GM13976 (cell line): ENCODE measurements at regions of chrX and their contacts with region 1.

Region 1: GRCh38 chrX:3638280-3638873 is 75.1 kb downstream of the PRKX start:
- DNase-seq: peak; percentile 65
- CTCF ChIP-seq: peak; percentile 46

Region 2: DNA sequence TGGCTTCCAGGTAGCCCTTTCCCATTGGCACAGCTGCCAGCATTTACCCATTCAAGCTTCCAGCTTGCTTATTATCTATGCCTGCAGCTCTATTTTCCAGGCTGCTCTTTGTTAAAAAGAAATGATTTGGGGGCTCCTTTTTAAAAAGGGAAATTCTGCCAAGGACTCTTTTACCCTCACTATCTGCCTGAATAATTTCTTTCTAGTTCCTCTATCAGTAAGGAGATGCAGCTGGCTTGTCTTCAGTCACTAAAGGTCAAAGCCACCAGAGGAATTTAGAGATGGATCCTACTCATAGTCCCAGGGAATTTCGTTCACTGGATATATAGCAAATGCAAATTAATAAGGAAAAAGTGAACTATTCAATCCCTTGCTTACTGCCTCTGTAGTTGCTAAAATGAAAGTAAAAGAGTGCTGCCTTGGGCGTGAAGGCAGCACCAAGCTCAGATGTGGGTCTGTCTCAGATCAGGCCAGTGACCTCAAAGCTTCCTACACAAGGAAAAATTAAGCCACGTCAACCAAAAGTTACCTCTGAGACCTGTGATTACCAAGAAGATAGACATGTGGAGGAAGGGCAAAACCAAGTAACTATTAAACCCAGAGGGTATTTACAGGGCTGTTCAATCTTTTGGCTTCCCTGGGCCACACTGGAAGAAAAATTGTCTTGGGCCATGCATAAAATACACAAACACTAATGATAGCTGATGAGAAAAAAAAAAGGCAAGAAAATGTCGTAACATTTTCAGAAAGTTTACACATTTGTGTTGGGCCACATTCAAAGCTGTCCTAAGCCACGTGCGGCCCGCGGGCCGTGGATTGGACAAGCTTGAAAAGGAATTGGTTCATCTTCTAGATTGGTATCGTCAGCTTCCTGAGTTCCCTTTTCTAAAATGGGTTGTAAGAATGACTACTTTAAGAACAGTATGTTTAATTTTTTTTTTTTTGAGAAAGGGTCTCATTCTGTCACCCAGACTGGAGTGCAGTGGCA is 591.8 kb before region 1 on chrX:
- in situ Hi-C with region 1: loop called (anchors 25 kb)
- DNase-seq: no peak
- CTCF ChIP-seq: no peak